Kidney (tissue), 22 donors: ENCODE measurements at regions of chr22 and their contacts with region 1.

Region 1: GRCh38 chr22:39309881-39310714 is 9.3 kb downstream of the RPL3 start:
- DNase-seq: no peak
- H3K4me3 ChIP-seq: no peak overlapping the region
- H3K27ac ChIP-seq: no peak overlapping the region
- H3K4me1 ChIP-seq: peaks cover 0 to 7% (median 0%) of the 10 kb centered on the region in 3 donors
- H3K27me3 ChIP-seq: no peaks in the 10 kb centered on the region
- CTCF ChIP-seq: no peak

Region 2: DNA sequence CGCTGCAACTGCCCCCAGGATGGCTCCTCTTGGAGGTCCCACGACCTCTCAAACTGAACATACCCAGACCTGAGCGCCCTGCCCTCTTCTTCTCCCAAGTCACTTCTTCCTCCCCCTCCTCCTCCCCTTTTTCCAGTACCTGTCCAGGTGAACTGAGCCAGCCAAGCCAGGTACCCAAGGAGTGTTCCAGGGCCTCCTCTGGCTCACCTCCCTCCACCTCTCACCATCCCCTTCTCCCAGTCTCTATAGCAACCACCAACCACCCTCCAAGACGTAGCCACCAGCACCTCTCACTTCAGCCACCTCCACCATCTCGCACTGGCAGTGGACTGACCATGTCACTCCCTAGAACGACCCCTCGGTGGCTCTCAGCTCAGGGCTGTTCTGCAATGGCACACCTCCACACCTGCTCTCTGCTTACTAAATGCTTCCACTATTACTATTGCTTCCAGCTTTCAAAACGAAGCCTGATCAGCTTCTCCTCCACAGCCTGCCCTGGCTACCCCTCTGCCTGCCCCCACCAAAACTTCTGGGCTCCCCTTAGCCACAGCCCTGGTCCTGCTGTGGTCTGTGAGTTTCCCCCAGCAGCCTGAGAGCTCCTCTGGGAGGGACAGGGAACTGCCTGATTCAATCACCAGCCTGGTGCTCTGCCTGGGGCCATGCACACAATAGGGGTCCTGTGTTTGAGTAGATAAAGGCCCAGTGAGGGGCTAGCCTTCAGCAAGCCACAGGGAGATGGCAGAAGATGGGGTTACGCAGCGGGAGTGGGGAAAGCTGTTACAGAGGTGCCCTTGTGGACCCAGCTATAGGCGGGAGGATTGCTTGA is 140.2 kb before region 1 on chr22:
- intact Hi-C with region 1: loop called (anchors 5 kb)
- DNase-seq: no peak
- H3K4me3 ChIP-seq: no peak overlapping the region
- H3K27ac ChIP-seq: no peak overlapping the region
- H3K4me1 ChIP-seq: peaks cover 7 to 31% (median 21%) of the 10 kb centered on the region in 3 donors
- H3K27me3 ChIP-seq: no peaks in the 10 kb centered on the region
- CTCF ChIP-seq: no peak